Sciatic nerve (tissue), 2 donors: ENCODE measurements at regions of chr10 and their contacts with region 1.

Region 1: GRCh38 chr10:108204479-108205305 is 1040.2 kb upstream of the SORCS1 start:
- DNase-seq: no peak
- ATAC-seq: no peak

Region 2: DNA sequence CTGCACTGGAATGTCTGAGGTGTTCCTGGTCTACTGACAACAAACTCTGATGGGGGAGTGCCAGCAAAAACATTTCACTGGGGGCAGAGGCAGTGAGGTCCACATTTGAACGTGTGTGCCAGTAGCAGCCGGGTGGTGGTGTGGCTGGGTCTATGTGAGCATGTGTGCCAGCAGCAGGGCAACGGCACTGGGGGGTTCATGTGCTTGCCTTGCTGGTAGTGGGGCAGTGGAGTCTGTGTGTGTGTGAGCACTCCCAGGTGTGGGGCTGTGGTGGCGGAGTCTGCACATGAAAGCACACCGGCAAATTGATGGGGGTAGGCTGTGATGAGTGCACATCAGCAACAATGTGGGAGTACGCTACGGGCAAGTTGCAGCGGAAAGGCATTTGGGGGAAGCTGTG is 990.8 kb before region 1 on chr10:
- intact Hi-C with region 1: loop called (anchors 10 kb)
- DNase-seq: no peak
- ATAC-seq: no peak

Region 3: DNA sequence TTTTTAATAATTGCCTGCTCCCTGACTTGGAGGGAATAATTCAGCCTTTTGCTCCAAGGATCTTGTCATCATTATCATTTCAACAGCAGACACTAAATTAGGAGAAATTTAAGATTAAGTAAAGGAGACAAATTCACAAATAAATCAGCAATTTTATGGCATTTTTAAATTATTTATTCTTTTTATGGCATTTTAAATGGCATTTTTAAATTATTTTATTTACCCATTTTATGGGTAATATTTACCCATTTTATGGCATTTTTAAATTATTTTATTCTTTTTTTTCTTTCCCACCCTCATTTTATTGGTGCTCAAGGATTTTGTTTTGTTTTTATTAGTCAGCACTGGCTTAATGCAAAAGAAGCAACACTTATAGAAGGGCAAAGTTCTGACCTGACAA is 160.8 kb after region 1 on chr10:
- intact Hi-C with region 1: no loop called
- DNase-seq: no peak
- ATAC-seq: no peak